Aorta (tissue), 5 donors: ENCODE measurements at regions of chr9 and their contacts with region 1.

Region 1: GRCh38 chr9:130053504-130054324 is at the start of gene GPR107:
- DNase-seq: peak; percentile 91 to 95
- ATAC-seq: peak; percentile 97
- H3K4me3 ChIP-seq: peak within 1 kb of the TSS; percentile 80 to 92
- H3K27ac ChIP-seq: peak within 1 kb of the TSS; percentile 49 to 58
- H3K4me1 ChIP-seq: peaks cover 0 to 3% of the 10 kb centered on the region in 2 donors
- H3K27me3 ChIP-seq: no peaks in the 10 kb centered on the region
- total RNA-seq, gene GPR107: 43.3 to 48.2 TPM

Region 2: GRCh38 chr9:130002320-130003046 is 51.2 kb before region 1 on chr9:
- intact Hi-C with region 1: loop called in 1 of 2 experiments (anchors 5 kb)
- DNase-seq: no peak
- ATAC-seq: no peak
- H3K4me3 ChIP-seq: no peak overlapping the region
- H3K27ac ChIP-seq: no peak overlapping the region
- H3K4me1 ChIP-seq: no peaks in the 10 kb centered on the region
- H3K27me3 ChIP-seq: no peaks in the 10 kb centered on the region